Activated CD4-positive, alpha-beta memory T cell treated with anti-CD3 and anti-CD28 coated beads for 36 hours (primary cell): ENCODE measurements at regions of chr10 and their contacts with region 1.

Region 1: DNA sequence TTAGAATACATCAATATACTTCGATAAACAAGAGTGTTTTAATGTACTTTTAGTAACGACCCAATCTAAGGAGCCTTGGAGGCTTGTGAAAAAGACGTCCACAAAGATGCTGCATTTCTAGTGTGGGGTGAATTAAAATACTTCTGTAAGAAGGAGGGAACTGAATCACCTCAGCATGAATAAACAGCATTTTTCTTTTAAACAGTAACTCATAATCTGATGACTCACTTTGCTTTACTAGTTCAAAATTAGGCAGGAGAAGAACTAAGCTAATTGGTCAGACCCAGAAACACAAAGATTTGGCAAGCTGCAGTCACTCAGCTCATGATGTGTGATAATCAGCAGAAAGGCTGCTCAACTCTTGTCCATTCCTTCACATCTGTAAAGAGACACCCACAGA is 24.2 kb downstream of the NCOA4 start:
- DNase-seq: no peak
- H3K4me3 Mint-ChIP-seq: no peak overlapping the region
- H3K27ac Mint-ChIP-seq: peak overlapping the region; percentile 29
- H3K4me1 Mint-ChIP-seq: no peaks in the 10 kb centered on the region
- H3K27me3 Mint-ChIP-seq: no peaks in the 10 kb centered on the region

Region 2: GRCh38 chr10:46022978-46023702 is 16.9 kb after region 1 on chr10:
- CTCF ChIA-PET with region 1: interaction called, 16 read pairs
- POLR2A ChIA-PET with region 1: interaction called, 3 read pairs
- intact Hi-C with region 1: loop called (anchors 2 kb)
- DNase-seq: peak; percentile 91
- H3K4me3 Mint-ChIP-seq: peak overlapping the region; percentile 78
- H3K27ac Mint-ChIP-seq: peak overlapping the region; percentile 86
- H3K4me1 Mint-ChIP-seq: peaks cover 82% of the 10 kb centered on the region
- H3K27me3 Mint-ChIP-seq: no peaks in the 10 kb centered on the region